PC-3 (cell line): ENCODE measurements at regions of chr12 and their contacts with region 1.

Region 1: GRCh38 chr12:38316391-38317129 is at the start of gene ALG10B:
- DNase-seq: peak; percentile 97
- ATAC-seq: peak; percentile 99
- H3K4me3 ChIP-seq: peak within 1 kb of the TSS; percentile 97
- H3K27ac ChIP-seq: peak within 1 kb of the TSS; percentile 67
- H3K4me1 ChIP-seq: peaks cover 17% of the 10 kb centered on the region
- H3K27me3 ChIP-seq: no peaks in the 10 kb centered on the region
- CTCF ChIP-seq: peak; percentile 72
- total RNA-seq, gene ALG10B: 9.4 and 18.7 TPM in 2 replicates

Region 2: DNA sequence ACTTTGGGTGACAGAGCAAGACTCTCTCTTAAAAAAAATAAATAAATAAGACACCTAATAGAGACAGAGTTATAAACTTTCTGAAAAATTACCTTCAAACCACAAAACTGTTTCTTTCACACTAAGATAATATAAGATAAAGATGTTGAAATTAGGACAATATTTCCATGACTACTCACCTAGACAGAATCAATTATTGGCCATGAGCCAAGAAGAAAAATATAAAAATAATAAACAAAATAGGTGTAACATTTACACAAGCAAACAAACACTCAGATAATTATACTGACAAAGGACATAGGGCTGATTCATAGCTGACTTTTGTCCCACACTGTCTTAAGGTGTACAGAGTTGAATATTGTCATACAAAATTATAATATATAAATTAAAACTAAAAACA is 245.7 kb before region 1 on chr12:
- CTCF ChIA-PET with region 1: no interaction called
- POLR2A ChIA-PET with region 1: no interaction called
- intact Hi-C with region 1: loop called (anchors 5 kb)
- DNase-seq: no peak
- ATAC-seq: no peak
- H3K4me3 ChIP-seq: no peak overlapping the region
- H3K27ac ChIP-seq: no peak overlapping the region
- H3K4me1 ChIP-seq: no peaks in the 10 kb centered on the region
- H3K27me3 ChIP-seq: no peaks in the 10 kb centered on the region
- CTCF ChIP-seq: no peak

Region 3: DNA sequence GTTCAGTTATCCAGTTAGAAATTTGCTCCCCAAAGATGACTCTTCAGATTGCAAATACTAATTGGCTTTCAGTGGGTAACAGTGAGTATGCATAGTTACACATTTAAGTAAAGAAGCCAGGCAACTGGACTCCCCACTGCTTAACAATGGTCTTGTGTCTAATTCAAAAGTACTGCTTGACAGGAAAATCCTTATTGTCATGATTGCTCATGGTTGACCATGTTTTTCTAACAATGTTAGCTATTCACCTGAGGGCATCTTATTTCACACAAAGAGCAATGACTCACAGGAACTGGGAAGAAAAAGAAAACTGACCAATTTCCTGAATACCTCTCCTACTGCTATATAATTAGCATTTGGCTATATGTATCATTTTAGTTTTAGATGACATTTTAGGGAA is 33.7 kb before region 1 on chr12:
- CTCF ChIA-PET with region 1: no interaction called
- POLR2A ChIA-PET with region 1: no interaction called
- intact Hi-C with region 1: loop called (anchors 5 kb)
- DNase-seq: peak; percentile 98
- ATAC-seq: peak; percentile 99
- H3K4me3 ChIP-seq: peak overlapping the region; percentile 11; the same call in 1 of the 2 replicates
- H3K27ac ChIP-seq: peak overlapping the region; percentile 91
- H3K4me1 ChIP-seq: peaks cover 25% of the 10 kb centered on the region
- H3K27me3 ChIP-seq: no peaks in the 10 kb centered on the region
- CTCF ChIP-seq: no peak

Region 4: DNA sequence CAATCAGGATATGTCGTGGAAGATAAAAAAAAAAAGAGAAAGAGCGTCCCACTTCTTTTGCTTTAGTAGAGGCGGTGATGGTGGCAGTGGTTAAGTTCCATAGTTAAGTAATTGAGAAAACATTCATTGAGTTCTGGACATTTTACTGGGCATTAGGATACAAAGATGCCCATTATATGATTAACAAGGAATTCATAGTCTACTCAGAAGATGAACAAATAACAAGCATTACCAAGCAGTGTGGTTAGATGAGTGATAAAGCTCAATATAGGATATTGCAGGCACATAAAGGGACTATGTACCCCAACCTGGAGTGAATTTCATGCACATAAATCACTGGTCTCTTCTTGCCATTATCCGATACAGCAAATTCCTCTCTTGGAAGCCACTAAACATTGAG is 53.8 kb after region 1 on chr12:
- CTCF ChIA-PET with region 1: no interaction called
- POLR2A ChIA-PET with region 1: no interaction called
- intact Hi-C with region 1: no loop called
- DNase-seq: peak; percentile 14
- ATAC-seq: no peak
- H3K4me3 ChIP-seq: no peak overlapping the region
- H3K27ac ChIP-seq: no peak overlapping the region
- H3K4me1 ChIP-seq: no peaks in the 10 kb centered on the region
- H3K27me3 ChIP-seq: no peaks in the 10 kb centered on the region
- CTCF ChIP-seq: no peak